ENCODE measurements at regions of chr3 and their contacts with region 1.

Region 1: GRCh38 chr3:125916376-125916978 is 52.5 kb upstream of the ROPN1B start:
- DNase-seq: peak; percentile 86 to 96
- ATAC-seq: peak; percentile 90 to 99 (median 92)
- H3K4me3 ChIP-seq: peak overlapping the region; percentile 69
- H3K4me3 Mint-ChIP-seq: peak overlapping the region; percentile 89
- H3K27ac ChIP-seq: peak overlapping the region; percentile 81
- H3K27ac Mint-ChIP-seq: peak overlapping the region; percentile 88 to 93
- H3K4me1 ChIP-seq: peaks cover 12% of the 10 kb centered on the region
- H3K4me1 Mint-ChIP-seq: peaks cover 6 to 7% of the 10 kb centered on the region in 2 donors
- H3K27me3 ChIP-seq: no peaks in the 10 kb centered on the region
- H3K27me3 Mint-ChIP-seq: no peaks in the 10 kb centered on the region
- CTCF ChIP-seq: no peak

Region 2: DNA sequence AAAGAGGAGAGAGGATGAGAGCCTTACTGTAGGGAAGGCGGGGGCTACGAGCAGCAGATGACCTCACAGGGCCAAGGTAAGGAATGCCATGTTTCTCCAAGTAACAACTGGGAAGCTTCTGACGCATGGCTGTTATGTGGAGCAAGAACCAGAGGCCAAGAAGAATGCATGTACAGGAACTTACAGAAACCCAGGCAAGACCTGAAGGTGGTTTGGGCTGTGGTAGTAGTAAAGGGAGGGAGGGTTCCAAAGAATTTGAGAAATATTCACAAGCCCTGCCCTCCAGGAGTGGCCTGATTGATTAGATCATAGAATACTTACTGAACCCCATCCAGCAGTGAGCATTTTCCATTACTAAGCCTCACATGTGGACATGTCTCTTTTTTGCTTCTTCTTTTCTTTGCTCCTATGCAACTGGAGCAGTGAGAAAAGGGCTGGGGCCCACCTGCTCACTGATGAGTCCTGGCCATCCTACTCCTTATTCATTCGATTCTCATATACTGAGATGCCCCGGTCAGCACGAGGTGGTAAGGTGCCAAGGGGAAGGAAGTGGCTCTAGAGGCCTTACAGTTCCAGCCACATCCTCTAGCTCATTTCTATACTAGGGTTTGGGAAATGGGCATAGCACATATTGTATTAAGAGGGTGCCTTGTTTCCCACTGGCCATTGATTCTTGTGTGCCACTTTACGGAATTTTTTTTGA is 695.6 kb before region 1 on chr3:
- intact Hi-C with region 1: no loop called
- DNase-seq: no peak
- ATAC-seq: peak in 2 of 3 donors; percentile 31 to 65
- H3K4me3 ChIP-seq: no peak overlapping the region
- H3K4me3 Mint-ChIP-seq: peak overlapping the region; percentile 43
- H3K27ac ChIP-seq: no peak overlapping the region
- H3K27ac Mint-ChIP-seq: peak overlapping the region; percentile 49 to 50
- H3K4me1 ChIP-seq: peaks cover 15% of the 10 kb centered on the region
- H3K4me1 Mint-ChIP-seq: peaks cover 21 to 31% of the 10 kb centered on the region in 2 donors
- H3K27me3 ChIP-seq: no peaks in the 10 kb centered on the region
- H3K27me3 Mint-ChIP-seq: no peaks in the 10 kb centered on the region
- CTCF ChIP-seq: no peak

Region 3: DNA sequence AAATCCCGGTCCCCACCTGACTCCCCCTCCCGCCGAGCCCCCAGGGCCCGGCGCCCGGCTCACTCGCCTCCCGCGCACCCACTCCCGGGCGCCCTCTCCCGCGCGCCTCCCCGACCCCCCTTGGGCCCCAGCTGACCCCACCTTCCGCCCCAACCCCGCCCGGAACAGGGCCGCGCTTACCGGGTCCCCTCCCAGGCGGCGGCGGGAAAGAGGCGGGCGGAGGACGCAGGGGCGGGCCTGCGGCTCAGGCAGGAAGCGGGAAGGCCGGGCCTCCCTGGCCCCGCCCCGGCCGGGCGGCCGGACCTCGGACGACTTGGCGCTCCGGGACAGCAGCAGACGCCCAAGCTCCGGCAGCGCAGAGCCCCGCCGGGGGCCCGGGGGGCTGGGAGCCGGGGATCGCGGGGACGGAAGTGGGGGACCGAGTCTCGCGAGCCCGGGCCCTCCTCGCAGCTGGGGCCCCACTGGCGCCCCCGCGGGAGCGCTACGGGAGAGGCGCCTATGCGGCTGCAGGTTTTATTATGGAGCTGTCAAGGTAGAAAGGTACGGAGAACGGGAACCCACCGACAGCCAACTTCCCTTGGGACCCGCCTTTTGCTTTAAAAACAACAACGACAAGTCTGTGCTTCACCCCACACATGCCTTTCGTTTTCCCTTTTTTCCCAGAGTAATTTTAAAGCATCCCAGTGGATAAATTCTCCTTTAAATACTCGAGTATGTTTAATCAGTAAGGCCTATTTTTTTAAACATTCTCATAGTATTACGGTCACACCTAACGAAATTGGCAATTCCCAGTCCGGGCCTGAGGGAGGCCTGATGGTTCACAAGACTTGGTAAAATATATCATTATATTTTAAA is 167.7 kb after region 1 on chr3 and contains the start of gene SLC41A3:
- intact Hi-C with region 1: loop called (anchors 2 kb)
- DNase-seq: peak; percentile 78 to 84
- ATAC-seq: peak; percentile 91 to 96 (median 93)
- H3K4me3 ChIP-seq: peak within 1 kb of the TSS; percentile 55
- H3K4me3 Mint-ChIP-seq: peak within 1 kb of the TSS; percentile 91
- H3K27ac ChIP-seq: peak within 1 kb of the TSS; percentile 56
- H3K27ac Mint-ChIP-seq: peak within 1 kb of the TSS; percentile 80 to 84
- H3K4me1 ChIP-seq: peaks cover 14% of the 10 kb centered on the region
- H3K4me1 Mint-ChIP-seq: peaks cover 22 to 31% of the 10 kb centered on the region in 2 donors
- H3K27me3 ChIP-seq: no peaks in the 10 kb centered on the region
- H3K27me3 Mint-ChIP-seq: no peaks in the 10 kb centered on the region
- CTCF ChIP-seq: peak; percentile 48
- total RNA-seq, gene SLC41A3: 24.2 to 29.6 (median 27.1) TPM

Region 4: GRCh38 chr3:126389112-126389793 is 472.8 kb after region 1 on chr3:
- intact Hi-C with region 1: loop called (anchors 5 kb)
- DNase-seq: peak; percentile 28 to 53
- ATAC-seq: peak; percentile 61 to 87 (median 65)
- H3K4me3 ChIP-seq: no peak overlapping the region
- H3K4me3 Mint-ChIP-seq: no peak overlapping the region
- H3K27ac ChIP-seq: no peak overlapping the region
- H3K27ac Mint-ChIP-seq: no peak overlapping the region
- H3K4me1 ChIP-seq: peaks cover 4% of the 10 kb centered on the region
- H3K4me1 Mint-ChIP-seq: peaks cover 0 to 7% of the 10 kb centered on the region in 2 donors
- H3K27me3 ChIP-seq: no peaks in the 10 kb centered on the region
- H3K27me3 Mint-ChIP-seq: peaks cover 43% of the 10 kb centered on the region in 2 donors
- CTCF ChIP-seq: peak; percentile 46

Region 5: DNA sequence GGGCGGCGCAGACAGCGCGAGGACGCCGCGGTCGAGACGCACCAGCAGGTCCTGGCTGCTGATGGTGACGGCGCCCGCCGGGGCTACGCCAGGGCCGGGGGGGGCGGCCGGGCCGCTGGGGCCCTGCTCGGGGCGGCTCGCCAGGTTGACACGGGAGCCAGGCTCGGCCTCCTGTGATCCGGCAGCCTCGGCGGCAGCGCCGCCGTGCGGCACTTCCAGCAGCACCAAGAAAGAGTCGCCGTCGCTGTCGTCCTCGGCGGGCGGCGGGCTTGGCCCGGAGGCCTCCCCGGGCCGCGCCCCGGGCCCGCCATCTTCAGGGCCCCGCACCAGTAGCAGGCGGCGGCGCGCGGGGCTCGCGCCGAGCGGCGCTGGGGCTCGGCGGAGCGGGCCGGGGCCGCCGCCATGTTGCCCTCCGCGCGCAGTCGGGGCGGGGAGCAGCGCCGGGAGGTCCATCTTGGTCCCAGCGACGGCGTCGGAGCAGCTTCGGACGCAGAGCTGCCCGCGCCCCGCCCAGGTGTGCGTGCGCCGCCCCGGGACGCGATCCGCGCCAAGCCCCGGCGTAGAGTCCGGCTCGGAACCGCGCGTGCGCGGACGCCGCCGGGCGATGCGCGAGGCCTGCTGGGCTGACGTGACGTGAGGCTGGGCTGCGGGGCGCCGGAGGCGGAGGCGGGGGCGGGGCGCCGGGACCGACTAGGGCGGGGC is 559.1 kb after region 1 on chr3 and contains the start of gene ZXDC:
- intact Hi-C with region 1: loop called (anchors 5 kb)
- DNase-seq: peak; percentile 87 to 97
- ATAC-seq: peak; percentile 82 to 94 (median 85)
- H3K4me3 ChIP-seq: peak within 1 kb of the TSS; percentile 62
- H3K4me3 Mint-ChIP-seq: peak within 1 kb of the TSS; percentile 79
- H3K27ac ChIP-seq: peak within 1 kb of the TSS; percentile 67
- H3K27ac Mint-ChIP-seq: peak within 1 kb of the TSS; percentile 80 to 88
- H3K4me1 ChIP-seq: peaks cover 40% of the 10 kb centered on the region
- H3K4me1 Mint-ChIP-seq: peaks cover 29 to 49% of the 10 kb centered on the region in 2 donors
- H3K27me3 ChIP-seq: no peaks in the 10 kb centered on the region
- H3K27me3 Mint-ChIP-seq: no peaks in the 10 kb centered on the region
- CTCF ChIP-seq: no peak
- total RNA-seq, gene ZXDC: 56.1 to 70.2 (median 68.4) TPM

Region 6: DNA sequence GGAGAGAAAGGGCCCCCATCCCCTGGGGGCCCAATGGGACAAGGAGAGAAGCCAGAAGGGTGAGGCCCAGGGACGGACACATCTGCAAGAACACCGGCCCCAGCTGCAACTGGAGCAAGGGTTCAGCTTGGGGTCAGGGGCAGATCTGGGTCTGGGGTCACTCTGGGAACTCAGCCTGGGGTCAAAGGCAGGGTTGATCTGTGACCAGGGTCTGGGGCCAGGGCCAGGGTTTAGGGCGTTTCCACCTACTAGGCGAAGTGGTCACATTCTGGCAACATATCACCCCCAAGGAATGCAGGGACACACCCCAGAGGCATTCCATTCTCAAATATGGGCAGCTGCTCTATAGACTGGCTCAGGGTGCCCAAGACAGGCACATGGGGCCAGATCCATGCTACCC is 592.1 kb after region 1 on chr3:
- intact Hi-C with region 1: no loop called
- DNase-seq: no peak
- ATAC-seq: no peak
- H3K4me3 ChIP-seq: no peak overlapping the region
- H3K4me3 Mint-ChIP-seq: no peak overlapping the region
- H3K27ac ChIP-seq: no peak overlapping the region
- H3K27ac Mint-ChIP-seq: no peak overlapping the region
- H3K4me1 ChIP-seq: no peaks in the 10 kb centered on the region
- H3K4me1 Mint-ChIP-seq: no peaks in the 10 kb centered on the region
- H3K27me3 ChIP-seq: no peaks in the 10 kb centered on the region
- H3K27me3 Mint-ChIP-seq: peaks cover 0 to 9% of the 10 kb centered on the region in 2 donors
- CTCF ChIP-seq: no peak

Measured in natural killer cell (primary cell).